GM12878 (cell line): ENCODE measurements at regions of chr16 and their contacts with region 1.

Region 1: DNA sequence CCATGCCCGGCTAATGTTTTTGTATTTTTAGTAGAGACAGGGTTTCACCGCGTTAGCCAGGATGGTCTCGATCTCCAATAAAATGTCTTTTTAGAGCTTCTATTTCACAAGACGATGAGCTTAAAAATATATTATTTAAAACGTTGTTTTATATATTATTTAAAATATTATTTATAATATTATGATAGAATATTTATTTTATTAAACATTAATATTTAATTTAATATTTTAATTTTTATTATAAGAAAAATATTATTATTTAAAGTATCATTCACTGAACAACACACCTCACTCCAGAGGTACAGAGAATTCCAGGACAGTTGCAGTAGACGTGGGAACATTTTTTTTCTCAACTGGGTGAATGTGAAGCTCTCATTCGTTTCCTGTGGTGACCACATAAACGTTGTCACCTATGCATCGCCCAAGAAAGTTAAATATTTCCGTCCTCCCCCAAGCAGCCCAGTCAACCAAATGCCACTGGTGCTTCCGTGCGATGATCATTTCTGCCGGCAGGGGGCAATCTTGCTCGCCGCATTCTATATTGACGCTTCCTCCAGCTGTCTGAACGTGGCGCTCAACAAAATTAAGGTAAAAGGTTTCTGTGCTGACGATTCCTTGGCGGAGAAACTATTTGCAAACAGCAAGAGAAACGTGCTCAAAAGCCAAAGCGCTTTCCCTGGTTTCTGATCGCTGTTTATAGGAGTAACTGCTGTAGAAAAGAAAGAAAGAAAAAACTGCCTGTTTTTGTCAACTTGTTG is 41.7 kb upstream of the PRSS54 start:
- DNase-seq: peak; percentile 51
- ATAC-seq: peak; percentile 97
- H3K4me3 ChIP-seq: no peak overlapping the region
- H3K27ac ChIP-seq: no peak overlapping the region
- H3K4me1 ChIP-seq: no peaks in the 10 kb centered on the region
- H3K27me3 ChIP-seq: no peaks in the 10 kb centered on the region
- CTCF ChIP-seq: peak; percentile 86 to 97 (median 94)
- EP300 ChIP-seq: no peak
- POLR2A ChIP-seq: no peak
- RAD21 ChIP-seq: peak; percentile 94

Region 2: DNA sequence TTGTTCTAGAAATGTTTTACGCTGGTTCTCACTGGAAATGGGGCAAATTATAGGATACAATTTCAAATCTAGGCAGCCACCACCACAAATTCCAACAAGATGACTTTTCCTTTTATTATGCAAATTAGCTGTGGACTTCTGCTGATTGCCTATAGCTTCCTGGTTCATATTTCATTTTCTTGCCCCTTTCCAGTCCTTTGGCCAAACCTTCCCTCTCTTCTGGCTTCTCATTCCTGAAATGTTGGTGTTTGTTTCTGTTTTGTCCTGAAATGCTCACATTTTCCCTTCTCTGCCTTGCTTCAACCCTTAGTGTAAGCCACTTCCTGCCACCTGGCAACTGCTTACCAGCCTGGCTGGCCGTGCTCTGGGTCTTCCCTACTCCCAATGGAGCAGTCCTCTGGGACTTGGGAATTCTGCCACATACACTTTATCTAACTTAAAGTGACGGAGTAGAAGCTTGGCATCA is 55.6 kb before region 1 on chr16:
- CTCF ChIA-PET with region 1: no interaction called
- POLR2A ChIA-PET with region 1: no interaction called
- RAD21 ChIA-PET with region 1: no interaction called
- SMC1A ChIA-PET with region 1: no interaction called
- in situ Hi-C with region 1: no loop called
- intact Hi-C with region 1: no loop called
- DNase-seq: no peak
- ATAC-seq: no peak
- H3K4me3 ChIP-seq: no peak overlapping the region
- H3K27ac ChIP-seq: no peak overlapping the region
- H3K4me1 ChIP-seq: no peaks in the 10 kb centered on the region
- H3K27me3 ChIP-seq: no peaks in the 10 kb centered on the region
- CTCF ChIP-seq: no peak
- EP300 ChIP-seq: no peak
- POLR2A ChIP-seq: no peak
- RAD21 ChIP-seq: no peak

Region 3: GRCh38 chr16:58317608-58318152 is 18.8 kb before region 1 on chr16:
- CTCF ChIA-PET with region 1: interaction called, 3 read pairs
- POLR2A ChIA-PET with region 1: interaction called, 4 read pairs
- RAD21 ChIA-PET with region 1: interaction called, 3 read pairs
- SMC1A ChIA-PET with region 1: interaction called, 10 read pairs
- in situ Hi-C with region 1: no loop called
- intact Hi-C with region 1: no loop called
- DNase-seq: no peak
- ATAC-seq: no peak
- H3K4me3 ChIP-seq: no peak overlapping the region
- H3K27ac ChIP-seq: no peak overlapping the region
- H3K4me1 ChIP-seq: no peaks in the 10 kb centered on the region
- H3K27me3 ChIP-seq: no peaks in the 10 kb centered on the region
- CTCF ChIP-seq: no peak
- EP300 ChIP-seq: no peak
- POLR2A ChIP-seq: no peak
- RAD21 ChIP-seq: no peak

Region 4: GRCh38 chr16:58392215-58393137 is 56.0 kb after region 1 on chr16 and contains the start of gene GINS3:
- CTCF ChIA-PET with region 1: interaction called, 12 read pairs
- POLR2A ChIA-PET with region 1: no interaction called
- RAD21 ChIA-PET with region 1: interaction called, 5 read pairs
- SMC1A ChIA-PET with region 1: interaction called, 3 read pairs
- in situ Hi-C with region 1: no loop called
- intact Hi-C with region 1: no loop called
- DNase-seq: peak; percentile 48
- ATAC-seq: peak; percentile 99
- H3K4me3 ChIP-seq: peak within 1 kb of the TSS; percentile 99
- H3K27ac ChIP-seq: peak within 1 kb of the TSS; percentile 83
- H3K4me1 ChIP-seq: no peaks in the 10 kb centered on the region
- H3K27me3 ChIP-seq: no peaks in the 10 kb centered on the region
- CTCF ChIP-seq: no peak
- EP300 ChIP-seq: no peak
- POLR2A ChIP-seq: peak; percentile 90
- RAD21 ChIP-seq: no peak
- polyA plus RNA-seq, gene GINS3: 13.6 to 14.5 TPM

Region 5: GRCh38 chr16:58515125-58515870 is 178.8 kb after region 1 on chr16 and contains the start of gene SETD6:
- CTCF ChIA-PET with region 1: interaction called, 13 read pairs
- POLR2A ChIA-PET with region 1: interaction called, 3 read pairs
- RAD21 ChIA-PET with region 1: interaction called, 6 read pairs
- SMC1A ChIA-PET with region 1: interaction called, 7 read pairs
- in situ Hi-C with region 1: no loop called
- intact Hi-C with region 1: no loop called
- DNase-seq: no peak
- ATAC-seq: peak; percentile 89
- H3K4me3 ChIP-seq: peak within 1 kb of the TSS; percentile 93
- H3K27ac ChIP-seq: peak within 1 kb of the TSS; percentile 54
- H3K4me1 ChIP-seq: peaks cover 37% of the 10 kb centered on the region
- H3K27me3 ChIP-seq: no peaks in the 10 kb centered on the region
- CTCF ChIP-seq: peak in 1 of 3 experiments; percentile 18; a peak in 1 of 6 replicates
- EP300 ChIP-seq: no peak
- POLR2A ChIP-seq: peak; percentile 84
- RAD21 ChIP-seq: no peak
- polyA plus RNA-seq, gene SETD6: 8.2 to 13.4 TPM

Region 6: GRCh38 chr16:58755989-58756649 is 419.6 kb after region 1 on chr16:
- CTCF ChIA-PET with region 1: interaction called, 20 read pairs
- POLR2A ChIA-PET with region 1: no interaction called
- RAD21 ChIA-PET with region 1: interaction called, 15 read pairs
- SMC1A ChIA-PET with region 1: interaction called, 13 read pairs
- in situ Hi-C with region 1: loop called (anchors 5 kb)
- intact Hi-C with region 1: no loop called
- DNase-seq: no peak
- ATAC-seq: peak; percentile 99
- H3K4me3 ChIP-seq: no peak overlapping the region
- H3K27ac ChIP-seq: no peak overlapping the region
- H3K4me1 ChIP-seq: peaks cover 3% of the 10 kb centered on the region; the same call in 1 of the 2 replicates
- H3K27me3 ChIP-seq: no peaks in the 10 kb centered on the region
- CTCF ChIP-seq: peak; percentile 76 to 89 (median 77)
- EP300 ChIP-seq: no peak
- POLR2A ChIP-seq: no peak
- RAD21 ChIP-seq: peak; percentile 93